ENCODE measurements at regions of chr4 and their contacts with region 1.

Region 1: DNA sequence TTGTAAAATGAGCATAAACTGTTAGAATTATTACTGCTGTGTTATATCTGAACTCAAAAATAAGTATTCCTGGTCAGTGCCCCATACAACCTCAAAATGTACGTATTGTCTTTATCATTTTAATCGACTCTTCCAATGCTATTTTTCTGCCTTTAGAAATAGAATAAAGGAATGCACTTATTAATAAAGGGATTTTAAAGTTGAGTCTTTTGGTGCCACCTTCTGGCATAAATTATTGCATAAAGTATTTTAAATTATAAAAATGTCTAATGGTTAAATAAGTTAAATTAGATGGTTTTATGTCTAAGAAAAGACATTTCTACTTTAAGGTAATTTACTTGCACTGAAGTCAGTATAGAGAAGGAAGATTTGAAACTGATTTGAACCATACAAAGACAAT is 424.0 kb upstream of the NDST4 start:
- DNase-seq: no peak
- ATAC-seq: no peak
- H3K4me3 ChIP-seq: no peak overlapping the region
- H3K27ac ChIP-seq: no peak overlapping the region
- H3K4me1 ChIP-seq: no peaks in the 10 kb centered on the region
- H3K27me3 ChIP-seq: no peaks in the 10 kb centered on the region
- CTCF ChIP-seq: no peak; a peak in 1 of 6 replicates
- EP300 ChIP-seq: no peak
- POLR2A ChIP-seq: no peak
- RAD21 ChIP-seq: peak; percentile 48

Region 2: DNA sequence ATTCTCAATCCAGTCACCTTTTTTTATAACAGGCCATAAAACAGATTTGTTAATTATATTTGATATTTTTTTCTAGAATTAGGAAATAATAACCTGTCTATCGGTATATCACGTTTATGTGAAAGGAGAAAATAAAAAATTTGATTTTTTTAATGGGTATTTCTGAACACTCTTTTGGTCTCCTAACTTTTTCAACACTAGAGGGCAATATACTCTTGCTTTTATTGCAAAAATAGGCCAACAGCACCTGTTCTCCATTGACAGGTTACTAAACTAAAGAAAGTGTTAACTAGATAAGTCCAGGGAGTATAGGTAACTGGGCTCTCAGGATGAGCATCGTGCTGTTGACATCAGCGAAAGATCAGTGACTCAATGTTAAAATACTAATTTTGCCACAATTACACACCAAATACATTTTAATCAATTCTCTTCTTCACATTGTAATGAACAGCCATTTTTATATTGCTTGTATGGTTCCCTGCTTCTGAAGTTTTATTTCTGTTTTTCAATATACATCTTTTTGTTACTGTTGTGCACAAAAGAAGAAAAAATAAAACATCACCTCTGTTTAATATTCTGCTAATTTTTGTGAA is 446.8 kb before region 1 on chr4:
- CTCF ChIA-PET with region 1: interaction called, 8 read pairs
- POLR2A ChIA-PET with region 1: no interaction called
- RAD21 ChIA-PET with region 1: interaction called, 5 read pairs
- SMC1A ChIA-PET with region 1: interaction called, 5 read pairs
- in situ Hi-C with region 1: loop called (anchors 25 kb)
- intact Hi-C with region 1: loop called (anchors 2 kb)
- DNase-seq: no peak
- ATAC-seq: peak; percentile 80
- H3K4me3 ChIP-seq: no peak overlapping the region
- H3K27ac ChIP-seq: no peak overlapping the region
- H3K4me1 ChIP-seq: no peaks in the 10 kb centered on the region
- H3K27me3 ChIP-seq: no peaks in the 10 kb centered on the region
- CTCF ChIP-seq: peak; percentile 39 to 60 (median 52); a peak in 5 of 6 replicates
- EP300 ChIP-seq: no peak
- POLR2A ChIP-seq: no peak
- RAD21 ChIP-seq: peak; percentile 64

Region 3: DNA sequence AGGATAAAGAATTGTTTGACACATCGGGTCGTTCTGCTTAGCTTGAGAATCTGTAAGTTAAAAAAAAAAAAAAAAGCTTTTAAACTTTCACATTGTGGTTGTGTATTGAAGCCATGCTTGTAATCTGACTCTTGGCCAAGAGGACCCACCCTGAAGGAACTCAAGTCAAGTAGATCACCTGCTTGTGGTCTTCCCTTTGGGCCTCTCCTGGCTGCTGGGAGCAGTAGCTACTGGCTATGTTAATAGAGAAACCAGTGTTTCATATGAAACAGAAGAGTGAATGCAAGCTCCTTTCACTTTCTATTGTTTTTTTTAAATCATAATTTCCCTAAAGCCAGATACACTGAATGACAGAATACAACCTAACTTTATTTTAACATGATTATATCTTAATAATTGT is 21.6 kb before region 1 on chr4:
- CTCF ChIA-PET with region 1: interaction called, 6 read pairs
- POLR2A ChIA-PET with region 1: interaction called, 3 read pairs
- RAD21 ChIA-PET with region 1: interaction called, 17 read pairs
- SMC1A ChIA-PET with region 1: interaction called, 17 read pairs
- in situ Hi-C with region 1: no loop called
- intact Hi-C with region 1: no loop called
- DNase-seq: peak; percentile 32
- ATAC-seq: peak; percentile 95
- H3K4me3 ChIP-seq: no peak overlapping the region
- H3K27ac ChIP-seq: no peak overlapping the region
- H3K4me1 ChIP-seq: peaks cover 9% of the 10 kb centered on the region; the same call in 1 of the 2 replicates
- H3K27me3 ChIP-seq: no peaks in the 10 kb centered on the region
- CTCF ChIP-seq: no peak
- EP300 ChIP-seq: no peak
- POLR2A ChIP-seq: no peak
- RAD21 ChIP-seq: no peak